ENCODE measurements at regions of chr9 and their contacts with region 1.

Region 1: GRCh38 chr9:36102742-36103495 is 33.6 kb upstream of the GLIPR2 start:
- DNase-seq: peak; percentile 77
- H3K4me3 ChIP-seq: no peak overlapping the region
- H3K27ac ChIP-seq: peak overlapping the region; percentile 41
- H3K4me1 ChIP-seq: peaks cover 19% of the 10 kb centered on the region
- H3K27me3 ChIP-seq: no peaks in the 10 kb centered on the region
- CTCF ChIP-seq: peak; percentile 70 to 81
- POLR2A ChIP-seq: peak; percentile 12

Region 2: DNA sequence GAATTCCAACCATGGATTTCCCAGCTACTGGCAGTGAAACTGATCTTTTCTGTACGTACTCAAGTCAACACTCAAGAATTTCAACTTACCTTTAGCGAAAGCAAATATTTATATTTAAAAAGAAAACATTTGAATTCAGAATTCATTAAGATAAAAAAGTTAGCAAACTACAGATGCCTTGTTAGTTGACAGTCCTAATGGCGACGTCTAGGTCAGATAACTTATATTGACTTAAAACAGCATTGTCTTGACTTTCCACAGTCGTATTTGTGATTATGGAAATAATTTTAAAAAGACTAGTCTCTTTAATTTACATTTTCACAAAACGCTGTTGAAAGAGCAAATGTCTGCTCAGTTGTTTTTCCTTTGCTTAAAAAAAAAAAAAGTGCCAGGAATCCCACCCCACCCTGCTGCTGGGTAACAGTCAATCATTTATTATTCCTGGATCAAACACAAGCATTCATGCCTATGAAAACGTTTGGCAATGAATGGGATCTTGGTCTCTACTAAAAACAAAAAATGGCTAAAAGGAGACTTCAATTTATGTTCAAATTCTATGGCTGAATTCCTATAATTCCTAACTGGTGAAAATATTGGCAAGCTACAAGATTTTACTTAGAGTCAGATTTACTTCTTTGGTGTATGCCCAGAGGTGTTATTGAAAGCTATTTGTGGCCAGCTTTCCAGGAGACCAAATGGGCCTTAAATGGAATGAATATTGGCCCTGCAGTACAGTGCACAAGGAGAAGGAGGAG is 167.0 kb before region 1 on chr9:
- CTCF ChIA-PET with region 1: no interaction called
- POLR2A ChIA-PET with region 1: no interaction called
- dilution Hi-C with region 1: no loop called
- intact Hi-C with region 1: no loop called
- DNase-seq: no peak
- H3K4me3 ChIP-seq: no peak overlapping the region
- H3K27ac ChIP-seq: no peak overlapping the region
- H3K4me1 ChIP-seq: no peaks in the 10 kb centered on the region
- H3K27me3 ChIP-seq: no peaks in the 10 kb centered on the region
- CTCF ChIP-seq: no peak
- POLR2A ChIP-seq: no peak

Region 3: DNA sequence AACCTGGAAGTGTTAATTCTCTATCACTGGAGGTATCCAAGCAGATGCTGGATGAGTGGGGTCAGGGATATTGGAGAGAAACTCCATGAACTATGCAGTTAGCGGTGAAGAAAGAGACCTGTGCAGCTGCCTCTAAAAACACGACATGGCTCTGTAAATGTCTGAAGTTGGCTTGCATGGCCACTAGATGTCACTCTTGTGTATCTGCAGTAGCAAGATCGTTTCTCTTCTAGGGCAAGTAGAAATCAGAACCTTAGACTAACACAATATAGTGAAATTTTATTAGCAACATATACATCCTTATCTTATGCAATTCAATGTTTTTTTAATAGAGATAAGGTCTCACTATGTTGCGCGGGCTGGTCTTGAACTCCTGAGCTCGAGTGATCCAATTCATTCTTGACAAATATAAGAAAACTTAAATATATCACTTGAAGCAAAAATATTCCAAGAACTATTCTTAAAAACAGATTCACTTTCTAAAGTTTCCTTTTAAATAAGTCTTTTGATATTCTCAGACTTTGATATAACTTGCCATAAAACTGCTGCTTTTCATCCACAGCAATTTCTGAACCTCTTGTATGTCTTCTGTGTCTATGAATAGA is 147.9 kb before region 1 on chr9:
- CTCF ChIA-PET with region 1: interaction called, 9 read pairs
- POLR2A ChIA-PET with region 1: interaction called, 3 read pairs
- dilution Hi-C with region 1: no loop called
- intact Hi-C with region 1: loop called (anchors 5 kb)
- DNase-seq: peak; percentile 79
- H3K4me3 ChIP-seq: no peak overlapping the region
- H3K27ac ChIP-seq: no peak overlapping the region
- H3K4me1 ChIP-seq: peaks cover 19% of the 10 kb centered on the region
- H3K27me3 ChIP-seq: no peaks in the 10 kb centered on the region
- CTCF ChIP-seq: peak; percentile 71 to 75
- POLR2A ChIP-seq: no peak

Region 4: DNA sequence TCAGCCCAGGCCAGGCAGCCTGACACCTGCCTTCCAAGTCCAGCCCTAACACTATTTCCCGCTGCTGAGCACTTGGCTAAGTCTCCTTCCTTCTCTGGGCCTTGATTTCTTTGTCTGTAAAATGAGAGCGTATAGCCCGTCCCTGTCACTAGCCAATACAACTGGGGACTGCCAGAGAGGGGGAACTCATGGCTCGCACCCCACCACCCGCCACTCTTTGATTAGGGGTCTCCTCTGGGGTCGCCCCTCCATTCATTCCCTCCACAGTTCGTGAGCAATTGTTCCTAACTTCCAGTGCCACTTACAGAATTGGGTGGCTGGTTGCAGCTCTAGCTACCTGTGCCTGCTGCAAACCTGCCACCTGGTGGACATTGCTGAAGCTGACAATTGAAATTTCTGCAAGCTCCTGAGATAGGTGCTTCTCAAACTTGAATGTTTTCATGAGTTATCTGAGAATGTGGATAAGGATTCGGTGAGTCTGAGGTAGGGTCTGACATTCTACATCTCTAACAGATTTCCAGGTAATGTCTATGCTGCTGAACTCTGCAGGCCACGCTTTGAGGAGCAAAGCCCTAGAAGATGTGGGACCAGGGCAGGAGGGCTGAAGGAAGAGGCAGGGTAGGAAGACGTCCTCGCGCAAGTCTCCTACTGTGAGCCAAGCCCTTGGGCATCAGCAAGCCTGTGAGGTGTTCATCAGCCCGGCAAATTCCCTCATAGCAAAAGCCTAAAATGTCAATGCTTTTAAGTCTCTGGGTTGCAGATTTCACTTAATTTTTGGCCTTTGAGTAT is 79.5 kb before region 1 on chr9:
- CTCF ChIA-PET with region 1: interaction called, 16 read pairs
- POLR2A ChIA-PET with region 1: no interaction called
- dilution Hi-C with region 1: no loop called
- intact Hi-C with region 1: no loop called
- DNase-seq: peak; percentile 71
- H3K4me3 ChIP-seq: no peak overlapping the region
- H3K27ac ChIP-seq: no peak overlapping the region
- H3K4me1 ChIP-seq: no peaks in the 10 kb centered on the region
- H3K27me3 ChIP-seq: no peaks in the 10 kb centered on the region
- CTCF ChIP-seq: peak; percentile 71 to 79
- POLR2A ChIP-seq: no peak

Region 5: DNA sequence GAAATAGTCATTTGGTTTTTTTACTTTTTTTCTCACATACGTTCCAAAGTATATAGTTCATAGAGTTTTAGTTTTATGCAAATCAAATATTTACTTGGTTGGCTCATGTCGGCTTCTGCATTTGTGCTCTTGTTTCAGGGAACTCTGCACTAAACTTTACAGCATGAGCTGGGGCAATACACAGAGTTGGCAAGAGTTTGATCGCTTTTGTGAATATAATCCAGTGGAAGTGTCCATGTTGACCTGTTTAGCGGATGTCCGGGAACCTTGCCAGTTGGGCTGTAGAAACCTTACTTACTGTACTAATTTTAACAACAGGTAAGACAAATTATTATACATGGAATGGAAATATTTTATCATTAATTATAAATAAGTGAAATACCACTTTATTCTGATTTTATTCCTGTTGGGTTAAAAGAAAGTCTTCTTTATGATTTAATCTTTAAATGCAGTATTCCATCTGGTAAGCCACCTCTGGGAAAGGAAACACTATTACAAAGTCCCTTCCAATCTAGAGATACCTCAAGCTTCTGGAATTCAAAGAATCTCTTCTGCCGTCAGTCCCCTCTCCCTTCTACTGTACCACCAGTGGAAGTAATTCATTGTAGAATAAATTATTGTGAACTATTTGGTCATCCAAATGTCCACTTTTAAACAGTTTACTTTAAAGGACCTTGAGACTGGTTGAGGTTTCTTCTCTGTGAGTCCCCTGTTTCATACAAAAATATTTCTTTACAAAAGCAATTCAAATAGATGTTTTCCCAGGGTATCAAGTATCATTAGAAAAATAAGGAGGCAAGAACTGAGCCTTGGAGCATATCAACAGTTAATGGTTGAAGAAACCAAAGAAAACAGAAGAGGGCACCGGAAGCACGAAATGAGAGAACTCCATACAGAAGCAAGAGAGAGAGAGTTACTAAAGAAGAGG is 11.6 kb before region 1 on chr9:
- CTCF ChIA-PET with region 1: interaction called, 9 read pairs
- POLR2A ChIA-PET with region 1: interaction called, 3 read pairs
- dilution Hi-C with region 1: no loop called
- intact Hi-C with region 1: loop called (anchors 1 kb)
- DNase-seq: peak; percentile 83
- H3K4me3 ChIP-seq: peak overlapping the region in 1 of 3 experiments; percentile 35
- H3K27ac ChIP-seq: peak overlapping the region; percentile 85
- H3K4me1 ChIP-seq: peaks cover 18% of the 10 kb centered on the region
- H3K27me3 ChIP-seq: no peaks in the 10 kb centered on the region
- CTCF ChIP-seq: no peak
- POLR2A ChIP-seq: no peak

Region 6: GRCh38 chr9:36148311-36149051 is 45.6 kb after region 1 on chr9:
- CTCF ChIA-PET with region 1: interaction called, 9 read pairs
- POLR2A ChIA-PET with region 1: interaction called, 5 read pairs
- dilution Hi-C with region 1: no loop called
- intact Hi-C with region 1: loop called (anchors 1 kb)
- DNase-seq: peak; percentile 86
- H3K4me3 ChIP-seq: no peak overlapping the region
- H3K27ac ChIP-seq: peak overlapping the region; percentile 69
- H3K4me1 ChIP-seq: peaks cover 35% of the 10 kb centered on the region
- H3K27me3 ChIP-seq: no peaks in the 10 kb centered on the region
- CTCF ChIP-seq: no peak
- POLR2A ChIP-seq: no peak

Region 7: GRCh38 chr9:36190388-36191287 is 87.7 kb after region 1 on chr9 and contains the start of gene CLTA:
- CTCF ChIA-PET with region 1: interaction called, 29 read pairs
- POLR2A ChIA-PET with region 1: interaction called, 3 read pairs
- dilution Hi-C with region 1: no loop called
- intact Hi-C with region 1: no loop called
- DNase-seq: peak; percentile 98
- H3K4me3 ChIP-seq: peak within 1 kb of the TSS; percentile 80 to 93 (median 90)
- H3K27ac ChIP-seq: peak within 1 kb of the TSS; percentile 78
- H3K4me1 ChIP-seq: peaks cover 31% of the 10 kb centered on the region
- H3K27me3 ChIP-seq: no peaks in the 10 kb centered on the region
- CTCF ChIP-seq: peak; percentile 40 to 50
- POLR2A ChIP-seq: peak; percentile 98
- total RNA-seq, gene CLTA: 281 and 317 TPM in 2 replicates

Measured in endothelial cell of umbilical vein (primary cell).